CD14-positive monocyte (primary cell): ENCODE measurements at regions of chr1 and their contacts with region 1.

Region 1: GRCh38 chr1:36397378-36398230 is at the start of gene LSM10:
- DNase-seq: peak; percentile 93 to 96 (median 93)
- H3K4me3 ChIP-seq: peak within 1 kb of the TSS; percentile 84 to 87 (median 85)
- H3K4me3 Mint-ChIP-seq: peak within 1 kb of the TSS; percentile 96 to 98
- H3K27ac ChIP-seq: peak within 1 kb of the TSS; percentile 81 to 94
- H3K27ac Mint-ChIP-seq: peak within 1 kb of the TSS; percentile 96 to 99 (median 98)
- H3K4me1 ChIP-seq: peaks cover 33 to 45% of the 10 kb centered on the region in 2 donors
- H3K4me1 Mint-ChIP-seq: peaks cover 42% of the 10 kb centered on the region
- H3K27me3 ChIP-seq: no peaks in the 10 kb centered on the region
- H3K27me3 Mint-ChIP-seq: peaks cover 0 to 8% (median 0%) of the 10 kb centered on the region in 3 donors
- CTCF ChIP-seq: no peak
- polyA plus RNA-seq, gene LSM10: 91.4 to 234 (median 224) TPM

Region 2: GRCh38 chr1:36359911-36360550 is 37.6 kb before region 1 on chr1:
- intact Hi-C with region 1: loop called in 1 of 2 experiments (anchors 5 kb)
- DNase-seq: peak in 1 of 3 donors; percentile 59
- H3K4me3 ChIP-seq: no peak overlapping the region
- H3K4me3 Mint-ChIP-seq: no peak overlapping the region
- H3K27ac ChIP-seq: no peak overlapping the region
- H3K27ac Mint-ChIP-seq: peak overlapping the region in 1 of 7 donors; percentile 78
- H3K4me1 ChIP-seq: peaks cover 4 to 5% of the 10 kb centered on the region in 2 donors
- H3K4me1 Mint-ChIP-seq: peaks cover 7% of the 10 kb centered on the region
- H3K27me3 ChIP-seq: no peaks in the 10 kb centered on the region
- H3K27me3 Mint-ChIP-seq: no peaks in the 10 kb centered on the region
- CTCF ChIP-seq: no peak

Region 3: GRCh38 chr1:36385410-36386257 is 12.0 kb before region 1 on chr1 and contains the start of gene STK40:
- intact Hi-C with region 1: loop called in 1 of 2 experiments (anchors 1 kb)
- DNase-seq: peak; percentile 98 to 99 (median 98)
- H3K4me3 ChIP-seq: peak within 1 kb of the TSS; percentile 69 to 89 (median 85)
- H3K4me3 Mint-ChIP-seq: peak within 1 kb of the TSS; percentile 96 to 97
- H3K27ac ChIP-seq: peak within 1 kb of the TSS; percentile 92 to 100
- H3K27ac Mint-ChIP-seq: peak within 1 kb of the TSS; percentile 99 to 100 (median 100)
- H3K4me1 ChIP-seq: peaks cover 58 to 69% of the 10 kb centered on the region in 2 donors
- H3K4me1 Mint-ChIP-seq: peaks cover 73% of the 10 kb centered on the region
- H3K27me3 ChIP-seq: no peaks in the 10 kb centered on the region
- H3K27me3 Mint-ChIP-seq: peaks cover 0 to 4% (median 0%) of the 10 kb centered on the region in 3 donors
- CTCF ChIP-seq: no peak
- polyA plus RNA-seq, gene STK40: 40.2 to 65.9 (median 55.8) TPM

Region 4: DNA sequence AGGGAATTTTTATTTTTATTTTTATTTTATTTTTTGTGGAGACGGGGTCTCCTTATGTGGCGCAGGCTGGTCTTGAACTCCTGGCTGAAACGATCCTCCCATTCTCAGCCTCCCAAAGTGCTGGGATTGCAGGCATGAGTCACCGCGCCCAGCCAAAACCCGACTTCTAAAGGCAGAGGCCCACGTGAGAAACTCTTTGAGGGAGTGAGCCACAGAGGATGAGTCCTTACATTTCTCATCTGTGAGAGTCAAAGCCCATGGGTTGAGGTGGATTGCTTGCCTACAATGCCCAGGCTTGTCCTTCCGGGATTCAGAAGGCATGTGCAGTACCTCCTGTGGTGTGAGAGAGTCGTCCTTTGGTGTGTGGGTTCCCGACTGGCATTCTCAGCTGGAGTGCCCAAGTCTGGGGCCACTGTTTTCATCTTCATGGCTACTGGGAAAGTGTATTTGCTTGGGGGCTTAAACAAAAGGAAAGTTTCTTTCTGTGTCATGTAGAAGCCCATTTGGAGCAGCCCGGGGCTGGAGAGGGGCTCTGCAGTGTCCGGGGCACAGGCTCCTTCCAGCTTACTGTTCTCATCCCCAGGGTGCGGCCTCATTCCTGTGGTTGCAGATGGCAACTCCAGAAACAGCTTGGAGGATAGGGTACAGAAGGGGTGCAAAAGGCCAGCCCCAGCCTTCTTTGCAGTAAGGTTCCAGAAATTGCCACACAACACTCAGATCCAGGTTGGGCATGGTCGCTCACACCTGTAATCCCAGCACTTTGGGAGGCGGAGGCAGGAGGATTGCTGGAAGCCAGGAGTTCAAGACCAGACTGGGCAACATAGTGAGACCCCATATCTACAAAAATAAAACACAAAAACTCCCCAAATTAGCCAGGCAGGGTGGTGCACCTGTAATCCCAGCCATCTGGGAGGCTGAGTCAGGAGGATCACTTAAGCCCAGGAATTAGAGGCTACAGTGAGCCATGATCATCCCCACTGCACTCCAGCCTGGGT is 114.5 kb after region 1 on chr1:
- intact Hi-C with region 1: no loop called
- DNase-seq: no peak
- H3K4me3 ChIP-seq: no peak overlapping the region
- H3K4me3 Mint-ChIP-seq: no peak overlapping the region
- H3K27ac ChIP-seq: no peak overlapping the region
- H3K27ac Mint-ChIP-seq: peak overlapping the region in 1 of 7 donors; percentile 36
- H3K4me1 ChIP-seq: peaks cover 25 to 27% of the 10 kb centered on the region in 2 donors
- H3K4me1 Mint-ChIP-seq: peaks cover 27% of the 10 kb centered on the region
- H3K27me3 ChIP-seq: no peaks in the 10 kb centered on the region
- H3K27me3 Mint-ChIP-seq: peaks cover 0 to 8% (median 0%) of the 10 kb centered on the region in 3 donors
- CTCF ChIP-seq: no peak